PC-9 (cell line): ENCODE measurements at regions of chr1 and their contacts with region 1.

Region 1: GRCh38 chr1:207789792-207790787 is 38.2 kb downstream of the CD46 start:
- DNase-seq: peak in 1 of 2 experiments; percentile 89
- H3K4me3 ChIP-seq: peak overlapping the region; percentile 30; the same call in 1 of the 2 replicates
- H3K27ac ChIP-seq: peak overlapping the region; percentile 53
- H3K4me1 ChIP-seq: peaks cover 40% of the 10 kb centered on the region
- H3K27me3 ChIP-seq: no peaks in the 10 kb centered on the region
- CTCF ChIP-seq: no peak

Region 2: GRCh38 chr1:207698822-207699483 is 91.1 kb before region 1 on chr1:
- CTCF ChIA-PET with region 1: no interaction called
- POLR2A ChIA-PET with region 1: no interaction called
- intact Hi-C with region 1: no loop called
- DNase-seq: peak; percentile 56 to 65
- H3K4me3 ChIP-seq: no peak overlapping the region
- H3K27ac ChIP-seq: no peak overlapping the region
- H3K4me1 ChIP-seq: no peaks in the 10 kb centered on the region
- H3K27me3 ChIP-seq: no peaks in the 10 kb centered on the region
- CTCF ChIP-seq: peak; percentile 78

Region 3: GRCh38 chr1:207751790-207752455 is 38.2 kb before region 1 on chr1 and contains the start of gene CD46:
- CTCF ChIA-PET with region 1: no interaction called
- POLR2A ChIA-PET with region 1: interaction called, 3 read pairs
- intact Hi-C with region 1: loop called (anchors 2 kb)
- DNase-seq: peak; percentile 97 to 98
- H3K4me3 ChIP-seq: peak within 1 kb of the TSS; percentile 91
- H3K27ac ChIP-seq: peak within 1 kb of the TSS; percentile 96
- H3K4me1 ChIP-seq: peaks cover 79% of the 10 kb centered on the region
- H3K27me3 ChIP-seq: no peaks in the 10 kb centered on the region
- CTCF ChIP-seq: no peak
- total RNA-seq, gene CD46: 149 and 214 TPM in 2 replicates